ENCODE measurements at regions of chr2 and their contacts with region 1.

Region 1: DNA sequence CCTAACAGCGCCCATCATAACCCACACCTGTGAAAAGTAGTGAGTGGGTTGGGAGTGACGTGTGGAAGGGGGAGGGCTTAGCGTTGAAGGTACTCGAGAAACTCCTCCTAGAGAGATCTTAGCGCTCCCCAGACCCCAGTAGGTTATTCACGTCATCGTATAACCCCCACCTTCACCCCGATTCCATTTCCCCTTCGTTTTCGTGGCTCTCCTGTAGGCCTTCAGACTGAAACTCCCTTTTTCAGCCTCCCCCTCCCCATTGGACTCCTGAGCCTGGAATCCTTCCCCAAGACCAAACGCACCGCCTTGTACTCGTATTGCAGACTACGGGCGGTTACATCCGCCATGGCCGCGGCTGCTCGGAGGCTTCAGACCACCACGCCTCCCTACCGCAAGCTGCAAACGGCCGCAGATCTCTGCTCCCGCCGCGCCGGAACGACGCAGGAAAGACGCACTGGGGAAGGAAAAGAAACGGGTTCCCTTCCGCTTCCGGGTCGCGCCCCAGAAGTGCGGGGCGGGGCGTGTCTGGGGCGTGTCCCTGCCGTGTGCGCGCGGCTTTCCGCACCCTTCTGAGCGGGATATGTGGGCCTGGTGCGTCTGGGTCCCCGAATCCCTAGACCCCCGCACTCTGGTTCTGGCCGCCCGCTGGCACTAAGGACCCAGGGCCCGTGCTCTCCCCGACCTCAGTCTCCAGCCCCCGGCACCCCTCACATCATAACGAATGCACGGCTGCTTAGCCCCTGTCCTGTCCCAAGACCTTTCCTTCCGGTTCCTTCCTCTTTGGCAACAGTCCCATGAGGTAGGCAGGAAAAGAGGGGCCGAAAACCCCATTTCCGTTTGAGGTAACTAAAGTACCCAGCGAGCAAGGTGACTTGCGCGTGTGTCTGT is at the start of gene SNRNP200:
- DNase-seq: peak; percentile 93
- ATAC-seq: peak; percentile 91
- H3K4me3 Mint-ChIP-seq: peak within 1 kb of the TSS; percentile 100
- H3K27ac Mint-ChIP-seq: peak within 1 kb of the TSS; percentile 99
- H3K4me1 Mint-ChIP-seq: peaks cover 48% of the 10 kb centered on the region
- H3K27me3 Mint-ChIP-seq: no peaks in the 10 kb centered on the region
- total RNA-seq, gene SNRNP200: 194 to 201 TPM

Region 2: DNA sequence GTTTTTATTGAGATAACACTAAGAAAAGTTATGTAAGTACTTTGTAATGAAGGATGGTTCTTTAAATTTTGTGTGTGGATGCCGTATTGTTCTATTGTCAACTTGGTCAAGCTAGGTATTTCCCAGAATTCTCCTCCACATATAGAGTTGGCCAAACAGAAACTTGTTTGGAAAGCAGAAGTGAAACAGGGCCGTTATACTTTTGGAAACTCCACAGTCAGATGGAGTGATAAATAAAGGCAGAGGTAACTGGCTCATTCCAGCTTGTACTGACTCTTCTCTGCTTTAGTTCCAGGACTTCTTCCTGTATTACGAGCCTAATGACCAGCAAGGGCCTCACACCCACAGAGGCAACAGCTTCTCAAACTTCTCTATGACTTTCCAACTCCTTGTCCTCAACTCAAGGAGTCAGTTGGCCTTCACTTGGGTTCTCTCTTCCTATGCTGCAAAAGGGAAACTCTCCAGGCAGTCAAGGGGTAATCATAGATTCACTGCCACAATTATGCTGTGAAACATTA is 80.3 kb before region 1 on chr2:
- POLR2A ChIA-PET with region 1: no interaction called
- DNase-seq: no peak
- ATAC-seq: no peak
- H3K4me3 Mint-ChIP-seq: no peak overlapping the region
- H3K27ac Mint-ChIP-seq: peak overlapping the region; percentile 6
- H3K4me1 Mint-ChIP-seq: peaks cover 12% of the 10 kb centered on the region
- H3K27me3 Mint-ChIP-seq: no peaks in the 10 kb centered on the region

Region 3: GRCh38 chr2:96315400-96316071 is 10.2 kb after region 1 on chr2:
- POLR2A ChIA-PET with region 1: interaction called, 96 read pairs
- DNase-seq: peak; percentile 56
- ATAC-seq: peak; percentile 72
- H3K4me3 Mint-ChIP-seq: peak overlapping the region; percentile 77
- H3K27ac Mint-ChIP-seq: peak overlapping the region; percentile 86
- H3K4me1 Mint-ChIP-seq: peaks cover 55% of the 10 kb centered on the region
- H3K27me3 Mint-ChIP-seq: no peaks in the 10 kb centered on the region

Region 4: GRCh38 chr2:96369186-96369585 is 63.9 kb after region 1 on chr2:
- POLR2A ChIA-PET with region 1: no interaction called
- DNase-seq: no peak
- ATAC-seq: no peak
- H3K4me3 Mint-ChIP-seq: no peak overlapping the region
- H3K27ac Mint-ChIP-seq: no peak overlapping the region
- H3K4me1 Mint-ChIP-seq: no peaks in the 10 kb centered on the region
- H3K27me3 Mint-ChIP-seq: no peaks in the 10 kb centered on the region

Region 5: DNA sequence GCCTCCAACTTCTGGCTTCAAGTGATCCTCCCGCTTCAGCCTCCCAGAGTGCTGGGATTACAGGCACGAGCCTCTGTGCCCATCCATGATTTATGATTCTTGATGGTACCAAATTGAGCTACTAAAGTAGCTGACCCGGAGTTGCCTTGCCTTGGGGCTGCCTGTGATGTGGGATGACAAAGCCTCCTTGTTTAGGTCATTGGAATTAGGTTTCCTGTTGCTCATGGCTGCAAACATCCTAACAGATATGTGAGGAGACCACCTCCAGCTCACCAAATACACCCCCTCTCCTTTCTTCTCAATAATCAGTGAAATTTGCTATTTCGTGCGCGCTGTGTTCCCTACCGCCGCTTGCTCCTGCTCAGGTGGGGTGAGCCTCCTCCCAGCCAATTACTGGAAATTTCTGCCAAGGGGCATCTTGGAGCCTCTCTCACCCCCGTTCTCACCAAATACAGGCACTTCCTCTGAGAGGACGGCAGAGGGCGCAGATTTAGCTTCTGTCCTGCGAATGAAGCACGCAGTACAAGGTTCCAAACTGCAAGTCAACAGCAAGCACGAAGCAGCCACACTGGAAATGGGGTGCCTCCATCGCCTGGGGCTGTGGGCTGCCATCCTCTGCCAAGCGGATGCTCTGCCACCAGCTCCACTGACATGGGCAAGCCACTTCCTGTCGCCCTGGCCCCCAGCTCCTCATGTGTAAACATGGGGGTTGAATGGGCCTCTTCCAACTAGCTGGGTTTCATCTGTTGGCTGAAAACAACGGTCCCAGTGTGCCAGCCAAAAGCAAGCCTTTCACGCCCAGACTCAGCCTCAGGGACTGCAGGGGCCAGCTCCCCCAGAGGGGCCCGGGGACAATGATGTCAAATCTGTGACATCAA is 101.9 kb after region 1 on chr2:
- POLR2A ChIA-PET with region 1: no interaction called
- DNase-seq: peak; percentile 69
- ATAC-seq: peak; percentile 92
- H3K4me3 Mint-ChIP-seq: peak overlapping the region; percentile 83
- H3K27ac Mint-ChIP-seq: peak overlapping the region; percentile 91
- H3K4me1 Mint-ChIP-seq: peaks cover 22% of the 10 kb centered on the region
- H3K27me3 Mint-ChIP-seq: no peaks in the 10 kb centered on the region

Region 6: GRCh38 chr2:96463119-96463518 is 157.8 kb after region 1 on chr2:
- POLR2A ChIA-PET with region 1: no interaction called
- DNase-seq: no peak
- ATAC-seq: no peak
- H3K4me3 Mint-ChIP-seq: no peak overlapping the region
- H3K27ac Mint-ChIP-seq: no peak overlapping the region
- H3K4me1 Mint-ChIP-seq: no peaks in the 10 kb centered on the region
- H3K27me3 Mint-ChIP-seq: peaks cover 8% of the 10 kb centered on the region